ENCODE measurements at regions of chr18 and their contacts with region 1.

Region 1: DNA sequence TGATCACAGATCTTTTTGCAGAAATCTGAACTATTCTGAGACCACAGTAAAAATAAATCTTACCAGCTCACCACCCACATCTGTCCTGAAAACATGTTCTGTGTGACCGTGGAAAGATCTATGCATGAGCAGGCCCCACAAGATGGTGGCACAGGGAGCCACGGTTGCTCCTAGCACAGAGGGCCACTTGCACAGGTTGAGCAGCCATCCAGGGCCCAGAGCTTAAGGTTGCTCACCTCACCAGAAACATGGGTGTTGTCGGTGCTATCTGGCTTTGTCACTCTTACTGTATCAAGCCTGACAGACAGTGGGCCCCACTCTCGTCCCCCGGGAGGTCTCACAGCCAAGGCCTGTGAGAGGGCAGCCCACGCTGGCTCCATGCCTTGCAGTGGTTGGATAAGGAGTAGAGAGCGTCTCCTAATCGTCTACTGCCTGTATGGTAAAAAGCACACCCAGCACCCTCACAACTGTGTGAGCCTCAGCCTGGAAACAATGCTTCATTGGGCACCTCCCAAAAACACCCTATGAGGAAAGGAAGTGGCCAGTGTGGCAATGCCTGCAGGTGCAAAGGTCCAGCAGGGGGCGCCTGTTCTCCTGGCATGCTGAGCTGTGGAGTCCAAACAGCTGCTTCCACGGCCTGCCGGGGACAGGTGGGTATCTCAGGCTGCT is 19.6 kb downstream of the TUBB6 start:
- DNase-seq: peak; percentile 82
- H3K4me3 Mint-ChIP-seq: no peak overlapping the region
- H3K27ac Mint-ChIP-seq: peak overlapping the region; percentile 31
- H3K4me1 Mint-ChIP-seq: peaks cover 10% of the 10 kb centered on the region
- H3K27me3 Mint-ChIP-seq: no peaks in the 10 kb centered on the region

Region 2: DNA sequence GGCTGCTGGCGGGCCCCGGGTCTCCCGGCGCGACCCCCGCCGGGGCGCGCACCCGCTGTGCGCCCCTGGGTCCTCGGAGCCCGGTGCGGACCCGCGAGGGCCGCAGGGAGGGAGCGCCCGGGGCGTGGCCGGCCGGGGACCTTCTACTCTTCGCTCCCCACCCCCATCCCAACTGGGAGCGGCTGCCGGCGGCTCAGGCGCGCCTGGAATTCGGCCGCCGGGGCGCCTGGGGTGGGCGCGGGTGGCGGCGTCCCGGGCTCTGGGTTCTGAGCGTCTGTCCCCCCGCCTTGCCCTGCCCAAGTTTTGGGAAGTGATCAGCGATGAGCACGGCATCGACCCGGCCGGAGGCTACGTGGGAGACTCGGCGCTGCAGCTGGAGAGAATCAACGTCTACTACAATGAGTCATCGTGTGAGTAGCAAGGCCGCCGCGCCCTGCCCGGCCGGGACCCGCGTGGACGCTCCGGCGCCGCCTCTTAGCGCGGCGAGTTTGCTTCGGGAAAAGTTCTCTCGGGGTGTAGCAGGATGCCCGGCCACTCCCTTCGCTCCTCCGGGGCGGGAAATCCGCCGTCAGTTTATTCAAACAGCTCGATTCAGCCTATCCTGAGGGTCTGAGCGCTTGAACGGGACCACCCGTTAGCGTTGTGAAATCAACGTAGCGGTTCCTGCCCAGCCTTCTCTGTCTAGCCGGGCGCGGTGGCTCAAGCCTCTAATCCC is 19.1 kb before region 1 on chr18:
- CTCF ChIA-PET with region 1: interaction called, 40 read pairs
- POLR2A ChIA-PET with region 1: no interaction called
- DNase-seq: peak; percentile 36
- H3K4me3 Mint-ChIP-seq: peak overlapping the region; percentile 69
- H3K27ac Mint-ChIP-seq: no peak overlapping the region
- H3K4me1 Mint-ChIP-seq: peaks cover 20% of the 10 kb centered on the region
- H3K27me3 Mint-ChIP-seq: peaks cover 48% of the 10 kb centered on the region

Region 3: DNA sequence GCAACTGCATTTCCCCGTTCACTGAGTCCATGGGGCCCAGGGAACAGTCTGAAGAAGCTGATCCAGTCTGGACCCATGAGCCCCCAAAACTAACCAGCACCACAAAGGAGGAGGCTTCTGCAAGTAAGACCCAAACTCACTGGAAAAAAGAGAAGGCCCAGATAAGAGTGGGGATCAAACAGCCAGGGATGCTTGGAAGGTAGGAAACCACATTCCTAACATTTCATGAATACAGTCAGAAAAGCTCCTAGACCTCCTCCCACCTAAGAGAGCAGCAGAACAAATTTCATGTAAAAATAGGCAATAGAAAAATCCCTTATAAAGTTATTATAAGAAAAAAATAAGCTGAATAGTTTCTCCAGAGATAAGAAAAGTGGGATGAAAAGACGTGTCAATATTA is 10.7 kb after region 1 on chr18:
- CTCF ChIA-PET with region 1: interaction called, 11 read pairs
- POLR2A ChIA-PET with region 1: no interaction called
- DNase-seq: no peak
- H3K4me3 Mint-ChIP-seq: no peak overlapping the region
- H3K27ac Mint-ChIP-seq: no peak overlapping the region
- H3K4me1 Mint-ChIP-seq: no peaks in the 10 kb centered on the region
- H3K27me3 Mint-ChIP-seq: no peaks in the 10 kb centered on the region

Region 4: GRCh38 chr18:12347895-12348294 is 20.3 kb after region 1 on chr18:
- CTCF ChIA-PET with region 1: interaction called, 17 read pairs
- POLR2A ChIA-PET with region 1: no interaction called
- DNase-seq: no peak
- H3K4me3 Mint-ChIP-seq: no peak overlapping the region
- H3K27ac Mint-ChIP-seq: no peak overlapping the region
- H3K4me1 Mint-ChIP-seq: peaks cover 7% of the 10 kb centered on the region
- H3K27me3 Mint-ChIP-seq: no peaks in the 10 kb centered on the region

Region 5: GRCh38 chr18:12460874-12461273 is 133.2 kb after region 1 on chr18:
- CTCF ChIA-PET with region 1: no interaction called
- POLR2A ChIA-PET with region 1: no interaction called
- DNase-seq: no peak
- H3K4me3 Mint-ChIP-seq: no peak overlapping the region
- H3K27ac Mint-ChIP-seq: no peak overlapping the region
- H3K4me1 Mint-ChIP-seq: no peaks in the 10 kb centered on the region
- H3K27me3 Mint-ChIP-seq: no peaks in the 10 kb centered on the region

Region 6: GRCh38 chr18:12659904-12660605 is 332.4 kb after region 1 on chr18:
- CTCF ChIA-PET with region 1: interaction called, 18 read pairs
- POLR2A ChIA-PET with region 1: no interaction called
- DNase-seq: peak; percentile 54
- H3K4me3 Mint-ChIP-seq: no peak overlapping the region
- H3K27ac Mint-ChIP-seq: no peak overlapping the region
- H3K4me1 Mint-ChIP-seq: peaks cover 18% of the 10 kb centered on the region
- H3K27me3 Mint-ChIP-seq: peaks cover 15% of the 10 kb centered on the region

Measured in activated CD4-positive, alpha-beta memory T cell treated with anti-CD3 and anti-CD28 coated beads, Interleukin-2, amount 10 ng/mL, durations not matched to agents 7 days and 5 days (primary cell).